ENCODE measurements at regions of chr13 and their contacts with region 1.

Region 1: GRCh38 chr13:26186118-26186870 is 35.8 kb downstream of the RNF6 start:
- DNase-seq: peak; percentile 73 to 87 (median 83)
- H3K4me3 ChIP-seq: peak overlapping the region; percentile 42 to 86 (median 58)
- H3K4me3 Mint-ChIP-seq: peak overlapping the region; percentile 91 to 96
- H3K27ac ChIP-seq: peak overlapping the region; percentile 79 to 90
- H3K27ac Mint-ChIP-seq: peak overlapping the region; percentile 88 to 96 (median 95)
- H3K4me1 ChIP-seq: peaks cover 18 to 20% of the 10 kb centered on the region in 2 donors
- H3K4me1 Mint-ChIP-seq: peaks cover 28% of the 10 kb centered on the region
- H3K27me3 ChIP-seq: no peaks in the 10 kb centered on the region
- H3K27me3 Mint-ChIP-seq: peaks cover 0 to 5% (median 0%) of the 10 kb centered on the region in 3 donors
- CTCF ChIP-seq: peak; percentile 38

Region 2: DNA sequence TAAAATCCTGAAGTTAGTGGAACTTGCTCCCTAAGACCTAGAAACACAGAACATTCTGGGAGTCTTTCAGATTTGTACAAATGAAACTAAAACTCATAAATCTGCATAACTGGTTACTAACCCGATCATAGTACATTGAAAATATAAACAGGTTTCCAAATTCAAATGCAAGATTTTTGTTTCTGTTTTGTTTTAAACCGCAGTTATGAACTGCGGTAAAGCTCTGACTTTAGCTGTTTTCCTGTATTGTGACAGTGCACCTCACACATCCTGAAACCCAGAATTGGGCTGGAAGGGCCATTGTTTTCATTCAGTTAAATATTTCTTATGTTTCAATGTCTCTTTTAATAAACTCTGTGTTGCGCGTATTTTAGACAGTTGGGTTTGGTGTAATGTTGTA is 339.1 kb before region 1 on chr13:
- intact Hi-C with region 1: no loop called
- DNase-seq: peak; percentile 11 to 27 (median 22)
- H3K4me3 ChIP-seq: peak overlapping the region in 1 of 3 experiments; percentile 58
- H3K4me3 Mint-ChIP-seq: peak overlapping the region; percentile 48 to 69
- H3K27ac ChIP-seq: peak overlapping the region; percentile 38 to 70
- H3K27ac Mint-ChIP-seq: peak overlapping the region; percentile 79 to 90 (median 86)
- H3K4me1 ChIP-seq: peaks cover 49 to 58% of the 10 kb centered on the region in 2 donors
- H3K4me1 Mint-ChIP-seq: peaks cover 60% of the 10 kb centered on the region
- H3K27me3 ChIP-seq: no peaks in the 10 kb centered on the region
- H3K27me3 Mint-ChIP-seq: peaks cover 3 to 7% (median 6%) of the 10 kb centered on the region in 3 donors
- CTCF ChIP-seq: no peak

Region 3: DNA sequence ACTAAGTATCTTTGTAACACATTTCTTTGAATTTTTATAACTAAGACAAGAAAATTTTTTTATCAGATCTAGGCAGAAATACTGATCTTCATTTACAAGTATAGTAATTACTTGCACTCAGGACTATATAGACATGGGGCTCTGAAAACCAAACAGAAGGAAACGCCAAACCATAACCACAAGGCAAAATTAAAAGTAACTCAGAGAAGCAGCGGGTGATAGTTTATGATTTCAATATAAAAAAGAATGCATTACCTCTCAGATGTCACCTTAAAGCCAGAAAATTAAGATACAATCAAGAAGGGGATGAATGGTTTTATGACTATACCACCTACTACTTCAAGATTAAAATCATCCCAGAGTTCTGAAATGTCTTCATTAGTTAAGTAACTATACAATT is 141.2 kb before region 1 on chr13:
- intact Hi-C with region 1: no loop called
- DNase-seq: no peak
- H3K4me3 ChIP-seq: no peak overlapping the region
- H3K4me3 Mint-ChIP-seq: no peak overlapping the region
- H3K27ac ChIP-seq: no peak overlapping the region
- H3K27ac Mint-ChIP-seq: no peak overlapping the region
- H3K4me1 ChIP-seq: no peaks in the 10 kb centered on the region
- H3K4me1 Mint-ChIP-seq: no peaks in the 10 kb centered on the region
- H3K27me3 ChIP-seq: peaks cover 19 to 32% of the 10 kb centered on the region in 2 donors
- H3K27me3 Mint-ChIP-seq: peaks cover 16 to 31% (median 18%) of the 10 kb centered on the region in 3 donors
- CTCF ChIP-seq: no peak

Region 4: DNA sequence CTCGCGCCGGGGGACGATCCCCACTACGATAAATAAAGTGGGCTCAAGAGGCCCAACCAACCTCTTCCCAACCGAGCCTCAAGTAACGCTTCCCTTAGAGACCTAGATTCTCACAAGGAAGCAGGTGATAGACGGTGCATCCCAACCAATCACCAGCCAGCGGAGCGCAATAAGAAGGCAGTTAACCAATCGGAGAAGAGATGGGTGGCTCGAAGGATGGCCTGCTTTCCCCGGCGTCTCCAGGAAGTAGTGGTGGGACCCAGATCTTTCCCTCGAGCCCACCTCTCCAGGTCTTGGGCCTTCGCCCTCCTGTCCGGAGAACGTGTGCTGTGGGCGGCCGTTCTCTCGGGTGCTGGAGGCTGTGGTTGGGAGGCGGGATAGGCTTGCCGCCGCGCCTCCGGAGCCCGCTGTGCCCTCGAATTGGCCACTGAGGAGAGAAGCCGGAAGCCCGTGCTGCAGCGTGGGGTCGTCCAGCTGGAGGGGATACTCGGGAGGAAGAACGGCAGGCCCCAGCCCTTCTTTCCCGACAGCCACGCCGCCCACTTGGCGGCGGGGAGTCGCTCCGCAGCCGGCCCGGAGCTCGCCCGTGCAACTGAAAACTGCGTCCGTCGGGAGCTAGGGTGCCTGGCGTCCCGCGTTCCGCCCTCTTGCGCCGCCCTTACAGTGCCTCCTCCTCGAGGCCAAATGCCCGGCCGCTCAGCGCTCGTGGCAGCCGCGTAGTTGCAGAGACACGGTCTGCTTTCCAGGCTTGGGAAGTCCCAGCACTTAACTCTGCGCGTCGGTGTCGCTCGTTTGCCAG is 35.6 kb after region 1 on chr13 and contains the start of gene RNF6:
- intact Hi-C with region 1: loop called in 1 of 2 experiments (anchors 5 kb)
- DNase-seq: peak; percentile 93 to 98 (median 94)
- H3K4me3 ChIP-seq: peak within 1 kb of the TSS; percentile 84 to 99 (median 95)
- H3K4me3 Mint-ChIP-seq: peak within 1 kb of the TSS; percentile 98 to 100
- H3K27ac ChIP-seq: peak within 1 kb of the TSS; percentile 85 to 98
- H3K27ac Mint-ChIP-seq: peak within 1 kb of the TSS; percentile 94 to 99 (median 98)
- H3K4me1 ChIP-seq: peaks cover 19 to 30% of the 10 kb centered on the region in 2 donors
- H3K4me1 Mint-ChIP-seq: peaks cover 27% of the 10 kb centered on the region
- H3K27me3 ChIP-seq: no peaks in the 10 kb centered on the region
- H3K27me3 Mint-ChIP-seq: peaks cover 2 to 4% (median 3%) of the 10 kb centered on the region in 3 donors
- CTCF ChIP-seq: no peak
- polyA plus RNA-seq, gene RNF6: 8.9 to 20.3 (median 15.0) TPM

Region 5: GRCh38 chr13:26253787-26254582 is 67.7 kb after region 1 on chr13 and contains the start of gene CDK8:
- intact Hi-C with region 1: loop called (anchors 5 to 10 kb)
- DNase-seq: peak; percentile 72 to 83 (median 77)
- H3K4me3 ChIP-seq: peak within 1 kb of the TSS; percentile 59 to 98 (median 66)
- H3K4me3 Mint-ChIP-seq: peak within 1 kb of the TSS; percentile 84 to 98
- H3K27ac ChIP-seq: peak within 1 kb of the TSS; percentile 65 to 79
- H3K27ac Mint-ChIP-seq: peak within 1 kb of the TSS; percentile 50 to 88 (median 82)
- H3K4me1 ChIP-seq: peaks cover 15 to 18% of the 10 kb centered on the region in 2 donors
- H3K4me1 Mint-ChIP-seq: peaks cover 25% of the 10 kb centered on the region
- H3K27me3 ChIP-seq: no peaks in the 10 kb centered on the region
- H3K27me3 Mint-ChIP-seq: peaks cover 0 to 7% (median 0%) of the 10 kb centered on the region in 3 donors
- CTCF ChIP-seq: no peak
- polyA plus RNA-seq, gene CDK8: 3.0 to 10.9 (median 3.3) TPM

Region 6: DNA sequence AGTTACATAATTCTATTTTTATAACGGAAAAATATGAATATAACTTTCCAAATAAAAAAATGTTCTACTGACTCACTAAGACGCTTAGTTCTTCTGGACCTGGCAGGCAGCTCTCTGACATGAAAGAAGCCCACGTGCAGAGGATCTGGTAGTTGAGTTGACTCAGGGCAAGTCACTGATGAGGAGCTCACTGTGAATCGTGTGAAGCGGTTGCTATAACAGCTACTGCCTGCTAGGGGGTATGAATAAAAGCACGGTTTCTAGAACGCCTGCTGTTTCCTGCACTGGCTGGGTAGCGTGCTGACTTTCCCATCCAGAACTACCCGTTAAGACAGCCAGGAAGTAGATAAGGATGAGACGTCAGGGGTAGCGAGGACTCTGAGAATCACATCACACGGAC is 316.5 kb after region 1 on chr13:
- intact Hi-C with region 1: loop called in 1 of 2 experiments (anchors 5 kb)
- DNase-seq: no peak
- H3K4me3 ChIP-seq: no peak overlapping the region
- H3K4me3 Mint-ChIP-seq: no peak overlapping the region
- H3K27ac ChIP-seq: no peak overlapping the region
- H3K27ac Mint-ChIP-seq: no peak overlapping the region
- H3K4me1 ChIP-seq: no peaks in the 10 kb centered on the region
- H3K4me1 Mint-ChIP-seq: no peaks in the 10 kb centered on the region
- H3K27me3 ChIP-seq: no peaks in the 10 kb centered on the region
- H3K27me3 Mint-ChIP-seq: peaks cover 2 to 11% (median 10%) of the 10 kb centered on the region in 3 donors
- CTCF ChIP-seq: no peak

Region 7: DNA sequence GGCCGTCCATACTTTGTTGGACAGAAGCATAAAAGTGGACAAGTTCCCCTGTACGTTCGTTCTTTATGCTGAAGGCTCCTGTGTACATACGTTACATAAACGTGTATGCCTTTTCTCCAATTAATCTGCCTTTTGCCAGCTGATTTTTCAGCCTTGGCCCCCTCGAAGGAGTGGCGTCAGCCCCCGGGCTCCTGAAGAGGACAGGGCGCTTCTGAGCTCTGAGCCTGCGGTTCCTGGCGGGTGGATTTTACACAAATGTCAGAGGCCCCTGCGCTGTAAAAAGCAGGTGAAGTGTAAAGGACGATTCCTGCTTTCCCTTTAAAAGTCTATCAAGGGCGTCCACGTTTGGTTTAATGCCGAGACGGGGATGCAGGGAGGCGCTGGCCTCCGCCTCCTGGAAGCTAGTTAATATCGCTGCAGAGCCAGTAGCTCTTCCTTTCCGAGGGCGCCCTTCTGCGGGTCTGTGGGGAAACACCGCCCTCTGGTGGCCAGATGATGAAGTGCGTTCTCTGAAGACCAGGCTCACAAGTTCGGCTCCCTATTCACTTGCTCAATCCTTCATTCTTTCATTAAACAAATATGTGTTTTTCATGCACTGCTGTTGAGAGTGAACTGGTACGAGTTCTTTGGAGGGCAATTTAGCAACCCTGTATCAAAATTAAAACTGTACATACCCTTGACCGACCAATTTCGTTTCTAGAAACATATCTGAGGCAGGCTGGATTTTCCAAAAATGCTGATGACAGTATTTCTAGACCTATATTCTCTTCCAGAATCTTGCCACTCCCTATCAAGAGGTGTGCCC is 512.3 kb after region 1 on chr13:
- intact Hi-C with region 1: loop called (anchors 5 to 10 kb)
- DNase-seq: peak; percentile 51 to 64 (median 56)
- H3K4me3 ChIP-seq: no peak overlapping the region
- H3K4me3 Mint-ChIP-seq: peak overlapping the region in 1 of 2 donors; percentile 35
- H3K27ac ChIP-seq: no peak overlapping the region
- H3K27ac Mint-ChIP-seq: no peak overlapping the region
- H3K4me1 ChIP-seq: no peaks in the 10 kb centered on the region
- H3K4me1 Mint-ChIP-seq: peaks cover 3% of the 10 kb centered on the region
- H3K27me3 ChIP-seq: peaks cover 0 to 3% of the 10 kb centered on the region in 2 donors
- H3K27me3 Mint-ChIP-seq: peaks cover 5 to 18% (median 11%) of the 10 kb centered on the region in 3 donors
- CTCF ChIP-seq: peak; percentile 96

Region 8: GRCh38 chr13:27076421-27076820 is 890.1 kb after region 1 on chr13:
- intact Hi-C with region 1: no loop called
- DNase-seq: no peak
- H3K4me3 ChIP-seq: no peak overlapping the region
- H3K4me3 Mint-ChIP-seq: no peak overlapping the region
- H3K27ac ChIP-seq: no peak overlapping the region
- H3K27ac Mint-ChIP-seq: no peak overlapping the region
- H3K4me1 ChIP-seq: no peaks in the 10 kb centered on the region
- H3K4me1 Mint-ChIP-seq: no peaks in the 10 kb centered on the region
- H3K27me3 ChIP-seq: no peaks in the 10 kb centered on the region
- H3K27me3 Mint-ChIP-seq: peaks cover 0 to 2% (median 0%) of the 10 kb centered on the region in 3 donors
- CTCF ChIP-seq: no peak